Psoas muscle (tissue), 8 donors: ENCODE measurements at regions of chr21 and their contacts with region 1.

Region 1: DNA sequence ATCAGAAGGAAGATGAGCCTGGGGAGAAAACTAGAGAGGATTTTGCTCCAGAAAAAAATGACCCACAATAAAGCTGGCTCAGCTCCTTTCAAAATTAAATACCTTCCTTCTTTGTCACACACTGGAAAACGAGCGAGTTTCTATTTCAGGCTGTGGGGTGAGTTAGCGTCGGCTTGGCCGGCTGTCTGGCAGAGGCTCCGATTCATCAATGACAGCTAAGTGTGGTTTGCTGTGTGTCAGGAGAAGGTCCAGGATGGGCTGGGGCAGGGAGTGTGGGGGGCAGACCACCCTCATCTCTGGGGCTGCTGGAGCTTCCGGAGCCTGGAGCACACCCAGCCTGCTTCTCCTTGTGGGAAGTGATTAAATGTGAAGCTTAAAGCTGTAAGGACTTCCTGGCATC is 120.2 kb downstream of the ETS2 start:
- DNase-seq: peak; percentile 73 to 83
- ATAC-seq: peak; percentile 94 to 98 (median 97)
- H3K4me3 ChIP-seq: peak overlapping the region; percentile 51
- H3K27ac ChIP-seq: peak overlapping the region; percentile 77
- H3K4me1 ChIP-seq: peaks cover 19% of the 10 kb centered on the region
- H3K27me3 ChIP-seq: no peaks in the 10 kb centered on the region
- CTCF ChIP-seq: no peak

Region 2: GRCh38 chr21:39125752-39126485 is 200.0 kb after region 1 on chr21:
- intact Hi-C with region 1: loop called in 1 of 2 experiments (anchors 10 kb)
- DNase-seq: peak in 1 of 2 donors; percentile 63
- ATAC-seq: peak; percentile 83 to 95 (median 94)
- H3K4me3 ChIP-seq: no peak overlapping the region
- H3K27ac ChIP-seq: peak overlapping the region; percentile 38
- H3K4me1 ChIP-seq: peaks cover 13% of the 10 kb centered on the region
- H3K27me3 ChIP-seq: no peaks in the 10 kb centered on the region
- CTCF ChIP-seq: peak; percentile 60